Dorsolateral prefrontal cortex (tissue), 120 donors: ENCODE measurements at regions of chrX and their contacts with region 1.

Region 1: DNA sequence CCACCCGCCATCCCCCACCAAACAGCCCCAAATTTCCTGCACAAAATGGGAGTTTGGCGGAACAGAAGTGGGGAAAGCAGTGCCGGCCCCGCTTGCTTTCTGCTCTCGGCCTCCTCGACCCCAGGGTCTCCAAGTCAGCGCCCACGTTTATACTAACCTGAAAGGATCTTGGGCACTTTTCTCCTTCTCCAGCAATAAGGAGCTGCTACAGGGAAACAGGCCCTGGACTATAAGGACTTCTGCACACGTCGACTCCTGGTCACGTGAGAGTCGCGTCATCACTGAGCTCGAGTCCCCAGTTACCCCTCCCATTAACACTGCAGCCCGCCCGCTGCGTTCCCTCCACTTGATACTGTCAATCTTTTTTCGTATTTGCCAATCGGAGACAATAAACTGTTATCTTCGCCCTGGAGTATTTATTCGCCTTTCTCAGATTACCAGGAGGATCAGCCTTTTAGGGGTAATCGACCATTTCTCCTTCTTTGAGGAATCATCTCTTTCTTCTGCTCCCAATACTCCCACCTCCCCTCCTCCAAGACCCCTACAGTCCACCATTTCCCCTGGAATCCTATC is at the start of gene TCEAL8:
- DNase-seq: peak; percentile 78 to 94 (median 88)
- H3K4me3 ChIP-seq: peak within 1 kb of the TSS; percentile 43 to 81 (median 65)
- H3K27ac ChIP-seq: peak within 1 kb of the TSS in 58 of 59 donors; percentile 45 to 94 (median 85)
- H3K27me3 ChIP-seq: peaks cover 0 to 64% (median 11%) of the 10 kb centered on the region in 45 donors
- CTCF ChIP-seq: no peak
- total RNA-seq, gene TCEAL8: 25.0 to 65.5 (median 52.4) TPM

Region 2: GRCh38 chrX:103329991-103330390 is 75.0 kb after region 1 on chrX and contains the start of gene TCEAL7:
- intact Hi-C with region 1: loop called in 1 of 2 experiments (anchors 10 kb)
- DNase-seq: peak in 9 of 10 donors; percentile 68 to 82 (median 74)
- H3K4me3 ChIP-seq: peak within 1 kb of the TSS; percentile 29 to 74 (median 59)
- H3K27ac ChIP-seq: peak within 1 kb of the TSS in 58 of 59 donors; percentile 39 to 94 (median 88)
- H3K27me3 ChIP-seq: peaks cover 0 to 95% (median 34%) of the 10 kb centered on the region in 45 donors
- CTCF ChIP-seq: peak in 2 of 56 donors; percentile 10
- total RNA-seq, gene TCEAL7: 26.7 to 130 (median 87.7) TPM

Region 3: GRCh38 chrX:103488332-103488731 is 233.3 kb after region 1 on chrX:
- intact Hi-C with region 1: no loop called
- DNase-seq: no peak
- H3K4me3 ChIP-seq: no peak overlapping the region
- H3K27ac ChIP-seq: no peak overlapping the region
- H3K27me3 ChIP-seq: peaks cover 0 to 50% (median 3%) of the 10 kb centered on the region in 45 donors
- CTCF ChIP-seq: peak in 49 of 56 donors; percentile 7 to 59 (median 37)